ENCODE measurements at regions of chr11 and their contacts with region 1.

Region 1: GRCh38 chr11:83071567-83072349 is at the start of gene RAB30:
- DNase-seq: peak; percentile 97
- total RNA-seq, gene RAB30: 21.0 TPM

Region 2: DNA sequence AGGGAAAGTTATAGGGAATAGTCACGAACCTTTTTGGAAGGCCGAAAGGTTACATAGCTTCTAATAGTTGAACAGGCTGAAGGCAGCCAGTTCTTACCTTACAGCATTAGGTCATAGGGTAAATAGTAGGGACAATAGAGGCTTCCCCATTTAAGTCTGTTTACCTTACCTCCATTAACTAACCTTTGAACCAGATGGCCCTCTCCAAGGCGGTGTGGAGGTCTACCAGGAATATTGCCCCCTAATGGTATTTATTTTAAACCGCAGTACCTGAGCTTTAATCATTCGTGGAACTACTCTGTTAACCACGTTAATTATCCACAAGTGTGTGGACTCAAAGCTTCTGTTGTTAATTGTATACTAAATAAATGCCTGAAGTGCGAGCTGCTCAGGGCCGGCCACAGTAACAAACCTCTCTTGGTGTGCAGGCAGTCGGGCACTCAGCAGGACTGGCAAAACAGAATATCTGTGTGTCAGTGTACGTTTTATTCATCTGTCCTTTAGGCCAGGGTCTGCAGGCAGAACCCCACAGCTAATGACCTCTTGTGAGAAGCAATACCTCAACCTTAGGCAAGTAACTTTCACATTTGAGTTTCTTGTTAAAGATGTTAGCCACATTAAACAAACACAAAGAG is 253.2 kb before region 1 on chr11:
- intact Hi-C with region 1: no loop called
- DNase-seq: no peak

Region 3: GRCh38 chr11:82927254-82927880 is 144.4 kb before region 1 on chr11:
- intact Hi-C with region 1: loop called (anchors 5 kb)
- DNase-seq: no peak

Region 4: DNA sequence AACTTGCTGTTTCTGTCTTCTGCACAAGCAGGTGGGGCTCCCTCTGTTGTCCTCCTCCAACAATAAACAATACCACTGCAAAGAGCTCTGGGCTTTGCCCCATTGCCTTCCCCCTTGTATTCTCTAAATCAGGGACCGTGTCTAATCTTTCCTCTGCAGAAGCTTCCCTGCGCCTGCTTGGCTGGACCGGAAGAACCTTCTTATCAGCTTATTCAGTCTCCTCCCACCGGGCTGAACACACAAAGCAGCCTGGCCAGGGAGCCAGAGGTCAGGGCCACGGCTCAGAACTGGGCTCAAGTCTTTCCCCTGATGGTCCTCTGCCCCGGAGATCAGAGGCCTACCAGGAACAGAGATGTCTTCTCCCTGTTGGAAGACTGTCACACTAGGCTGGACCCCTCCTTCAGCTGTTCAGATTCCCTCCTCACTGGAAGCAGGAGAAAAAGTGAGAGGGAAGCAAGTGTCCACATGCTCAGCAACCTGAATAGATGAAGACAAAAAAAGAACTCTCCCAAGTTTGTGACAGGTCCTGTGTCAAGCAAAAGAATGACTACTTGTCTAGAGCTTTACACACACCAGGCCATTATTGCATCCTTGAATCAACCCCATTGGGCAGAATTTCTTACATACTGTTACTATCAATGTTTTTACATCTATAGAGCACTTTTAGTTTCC is 63.7 kb before region 1 on chr11:
- intact Hi-C with region 1: loop called (anchors 2 kb)
- DNase-seq: peak; percentile 84

Region 5: DNA sequence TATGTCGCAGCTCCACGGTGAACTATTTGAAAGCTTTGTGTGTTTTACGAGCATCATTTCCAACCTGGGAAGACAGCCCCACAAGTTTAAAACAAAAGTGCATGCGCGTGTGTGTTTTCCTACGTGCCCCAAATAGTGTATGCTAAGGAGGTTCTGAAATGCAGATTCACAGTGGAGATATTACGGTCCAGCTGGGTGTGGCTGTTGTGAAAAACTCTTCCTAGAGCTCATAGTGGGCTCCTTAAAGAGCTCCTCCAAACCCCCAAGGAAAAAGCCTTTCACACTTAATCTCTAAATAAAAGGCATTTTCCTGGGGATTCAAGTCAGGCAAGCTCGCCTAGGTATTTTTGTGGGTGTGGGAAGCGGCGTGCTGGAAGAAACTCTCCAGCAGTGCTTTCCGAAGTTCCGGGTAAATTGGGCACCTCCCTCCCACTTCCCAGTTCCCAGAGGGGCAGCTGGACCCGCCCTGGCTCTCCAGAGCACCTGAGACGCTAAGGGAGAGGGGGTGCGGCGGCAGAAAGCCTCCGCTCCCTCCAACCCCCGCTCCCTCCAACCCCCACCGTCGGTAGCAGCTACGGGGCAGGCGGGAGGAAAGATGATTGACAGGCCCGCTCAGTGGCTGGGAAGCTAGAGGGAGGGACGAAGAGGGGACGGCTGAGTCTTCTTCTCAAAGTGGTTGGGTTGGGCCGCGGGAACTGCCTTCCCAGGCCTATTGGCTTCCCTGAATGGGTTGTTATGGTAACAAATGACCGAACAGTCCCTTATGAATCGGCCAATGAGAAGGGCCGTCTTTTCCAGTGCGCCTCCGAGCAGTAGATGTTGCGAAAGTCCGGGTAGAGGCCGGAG is 84.6 kb after region 1 on chr11:
- intact Hi-C with region 1: loop called (anchors 1 kb)
- DNase-seq: peak; percentile 99

Measured in cardiac septum (tissue), 1 donor.